Cardiac septum (tissue), 1 donor: ENCODE measurements at regions of chr4 and their contacts with region 1.

Region 1: GRCh38 chr4:6716018-6716911 is at the start of gene BLOC1S4:
- DNase-seq: peak; percentile 92
- total RNA-seq, gene BLOC1S4: 7.5 TPM

Region 2: DNA sequence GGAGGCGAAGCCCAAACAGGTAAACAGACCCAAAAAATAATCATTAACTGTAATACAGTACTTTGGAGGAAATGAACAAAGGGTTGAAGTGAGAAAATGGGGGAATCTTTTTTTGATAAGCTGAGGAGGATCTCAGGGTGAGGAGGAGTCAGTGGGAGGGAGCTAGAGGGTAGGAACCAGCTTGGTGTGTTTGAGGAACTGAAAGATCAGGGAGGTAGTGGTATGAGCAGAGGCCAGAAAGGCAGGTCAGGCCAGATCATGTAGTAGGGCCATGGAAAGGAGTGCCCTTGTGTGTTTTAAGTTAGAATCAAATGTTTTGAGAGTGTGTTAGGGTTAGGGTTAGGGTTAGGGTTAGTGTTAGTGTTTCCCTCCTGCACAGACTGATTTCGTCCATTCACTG is 292.7 kb before region 1 on chr4:
- intact Hi-C with region 1: no loop called
- DNase-seq: no peak

Region 3: GRCh38 chr4:6470502-6471306 is 245.6 kb before region 1 on chr4:
- intact Hi-C with region 1: no loop called
- DNase-seq: peak; percentile 74

Region 4: GRCh38 chr4:6783053-6783981 is 67.1 kb after region 1 on chr4:
- intact Hi-C with region 1: loop called (anchors 1 kb)
- DNase-seq: peak; percentile 98

Region 5: GRCh38 chr4:6974138-6974848 is 258.0 kb after region 1 on chr4:
- intact Hi-C with region 1: loop called (anchors 5 kb)
- DNase-seq: peak; percentile 90

Region 6: DNA sequence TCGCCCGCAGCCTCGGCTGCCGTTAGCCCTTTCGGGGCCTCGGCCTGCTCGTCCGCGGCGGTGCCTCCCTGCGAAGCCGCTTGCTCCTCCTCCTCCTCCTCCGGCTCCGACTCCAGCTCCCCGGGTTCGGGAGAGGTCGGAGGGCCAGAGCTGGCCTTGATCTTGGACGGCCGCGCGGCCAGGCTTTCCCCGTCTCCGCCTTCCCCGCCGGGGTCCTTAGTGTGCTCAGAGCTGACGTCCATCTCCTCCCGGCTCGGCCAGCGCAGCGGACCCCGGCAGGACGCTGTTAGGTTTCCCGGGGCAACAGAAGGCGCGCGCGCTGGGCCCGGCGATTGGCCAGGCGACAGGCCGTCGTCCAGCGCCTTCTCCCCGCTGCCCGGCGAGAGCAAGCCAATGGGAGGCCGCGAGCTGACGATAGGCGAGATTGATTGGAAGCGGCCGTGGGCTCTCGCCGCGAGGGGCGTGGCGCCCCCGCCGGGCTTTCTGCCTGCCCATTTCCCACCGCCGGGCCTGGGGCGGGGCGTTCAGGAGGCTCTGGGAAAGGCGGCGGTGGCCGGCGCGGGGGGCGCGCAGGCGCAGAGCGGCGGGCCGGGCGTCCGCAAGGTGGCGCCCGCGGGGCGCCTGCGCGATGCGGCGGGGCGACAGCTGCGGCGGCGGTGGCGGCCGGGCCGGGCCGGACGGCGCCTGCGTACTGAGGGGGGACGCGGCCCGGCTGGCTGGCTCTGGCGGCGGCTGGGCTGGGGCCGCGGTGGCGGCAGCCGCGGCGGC is 326.6 kb after region 1 on chr4 and contains the start of gene TADA2B:
- intact Hi-C with region 1: loop called (anchors 10 kb)
- DNase-seq: peak; percentile 98
- total RNA-seq, gene TADA2B: 25.6 TPM